ENCODE measurements at regions of chr3 and their contacts with region 1.

Region 1: GRCh38 chr3:46895204-46895660 is 17.7 kb downstream of the PTH1R start:
- DNase-seq: peak in 1 of 2 donors; percentile 61
- ATAC-seq: peak in 1 of 2 donors; percentile 29
- H3K4me3 ChIP-seq: no peak overlapping the region
- H3K27ac ChIP-seq: no peak overlapping the region
- H3K4me1 ChIP-seq: peaks cover 11 to 14% of the 10 kb centered on the region in 2 donors
- H3K27me3 ChIP-seq: no peaks in the 10 kb centered on the region
- CTCF ChIP-seq: peak; percentile 70 to 89 (median 87)
- POLR2A ChIP-seq: no peak

Region 2: GRCh38 chr3:46717447-46718231 is 177.6 kb before region 1 on chr3 and contains the start of gene PRSS50:
- in situ Hi-C with region 1: loop called in 2 of 4 experiments (anchors 10 kb)
- intact Hi-C with region 1: no loop called
- DNase-seq: no peak
- ATAC-seq: no peak
- H3K4me3 ChIP-seq: no peak within 1 kb of the TSS
- H3K27ac ChIP-seq: no peak within 1 kb of the TSS
- H3K4me1 ChIP-seq: no peaks in the 10 kb centered on the region
- H3K27me3 ChIP-seq: peaks cover 0 to 8% (median 2%) of the 10 kb centered on the region in 3 donors
- CTCF ChIP-seq: peak in 2 of 5 experiments; percentile 25 to 28
- POLR2A ChIP-seq: no peak
- total RNA-seq, gene PRSS50: not detected

Region 3: DNA sequence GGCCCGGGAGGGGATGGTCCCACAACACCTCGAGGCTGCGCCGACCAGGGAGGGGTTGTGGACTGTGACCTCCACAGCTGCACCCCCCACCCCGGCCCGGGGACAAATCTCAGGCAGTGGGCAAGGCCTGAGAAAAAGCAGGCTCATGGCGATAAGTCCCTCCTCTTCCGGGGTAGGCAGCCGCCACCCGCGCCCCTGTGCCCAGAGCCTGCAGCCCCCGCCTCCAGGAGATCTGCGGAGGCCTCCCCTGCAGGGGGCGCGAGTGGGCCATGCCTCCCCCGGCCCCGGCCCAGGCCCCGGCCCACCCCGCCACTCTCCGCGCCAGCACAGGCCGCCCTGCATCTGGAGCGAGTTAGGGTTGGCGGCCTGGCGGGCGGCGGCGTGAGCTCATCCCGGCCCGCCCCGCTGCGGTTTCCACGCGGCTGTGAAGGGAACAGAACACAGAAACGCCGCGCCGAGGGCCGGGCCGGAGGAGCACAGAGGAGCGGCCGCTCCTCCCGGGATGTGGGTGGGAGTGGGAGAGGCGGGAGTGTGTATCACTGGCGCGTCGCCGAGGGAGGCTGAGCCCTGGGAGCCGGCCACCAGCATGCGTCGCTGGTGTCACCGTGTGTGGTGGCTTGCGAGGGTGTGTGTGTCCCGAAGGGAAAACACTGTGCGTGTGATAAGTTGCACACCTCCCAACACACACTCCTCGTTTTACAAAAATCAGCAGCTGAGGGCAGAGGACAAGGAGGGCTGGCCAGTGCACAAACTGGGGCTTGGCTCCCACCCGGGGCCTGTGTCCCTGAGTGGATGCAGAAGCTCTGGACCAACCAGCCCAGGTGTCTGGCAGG is 49.2 kb before region 1 on chr3:
- in situ Hi-C with region 1: no loop called
- intact Hi-C with region 1: loop called (anchors 5 kb)
- DNase-seq: peak; percentile 41 to 61
- ATAC-seq: peak; percentile 51 to 59
- H3K4me3 ChIP-seq: peak overlapping the region; percentile 51 to 58 (median 55)
- H3K27ac ChIP-seq: peak overlapping the region; percentile 58 to 81 (median 75)
- H3K4me1 ChIP-seq: peaks cover 5 to 25% of the 10 kb centered on the region in 2 donors
- H3K27me3 ChIP-seq: no peaks in the 10 kb centered on the region
- CTCF ChIP-seq: peak in 4 of 5 experiments; percentile 40 to 51 (median 45)
- POLR2A ChIP-seq: peak in 1 of 2 donors; percentile 28

Region 4: GRCh38 chr3:46866720-46867549 is 28.3 kb before region 1 on chr3:
- in situ Hi-C with region 1: no loop called
- intact Hi-C with region 1: loop called (anchors 1 kb)
- DNase-seq: peak; percentile 41 to 68
- ATAC-seq: peak; percentile 40 to 56
- H3K4me3 ChIP-seq: peak overlapping the region in 2 of 4 donors; percentile 7 to 19
- H3K27ac ChIP-seq: peak overlapping the region; percentile 68 to 89 (median 72)
- H3K4me1 ChIP-seq: peaks cover 34 to 36% of the 10 kb centered on the region in 2 donors
- H3K27me3 ChIP-seq: no peaks in the 10 kb centered on the region
- CTCF ChIP-seq: peak; percentile 86 to 95 (median 91)
- POLR2A ChIP-seq: no peak